ENCODE measurements at regions of chr9 and their contacts with region 1.

Region 1: GRCh38 chr9:4762108-4762885 is 21.3 kb upstream of the AK3 start:
- DNase-seq: peak; percentile 76
- H3K4me3 ChIP-seq: no peak overlapping the region
- H3K27ac ChIP-seq: no peak overlapping the region
- H3K4me1 ChIP-seq: no peaks in the 10 kb centered on the region
- H3K27me3 ChIP-seq: no peaks in the 10 kb centered on the region
- CTCF ChIP-seq: peak; percentile 54 to 88 (median 86)
- POLR2A ChIP-seq: no peak

Region 2: DNA sequence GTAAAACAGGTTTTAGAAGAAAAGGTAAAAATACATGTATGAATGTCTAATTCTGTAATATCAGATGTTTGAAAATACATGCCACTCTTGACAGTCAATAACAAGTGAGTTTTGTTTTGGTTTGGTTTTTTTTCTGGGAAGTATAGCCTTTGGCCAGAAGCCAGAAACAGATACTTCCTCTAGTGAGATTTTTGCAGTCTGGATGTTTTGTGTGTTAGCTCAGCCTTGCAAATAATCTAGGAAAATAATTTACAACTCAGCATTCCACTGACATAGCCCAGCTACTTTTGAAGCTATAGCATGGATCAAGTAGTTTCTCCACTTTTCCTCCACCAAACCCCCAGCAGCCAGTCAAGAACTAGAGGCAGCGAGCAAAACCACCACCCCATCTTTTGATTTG is 215.3 kb before region 1 on chr9:
- intact Hi-C with region 1: no loop called
- DNase-seq: no peak
- H3K4me3 ChIP-seq: no peak overlapping the region
- H3K27ac ChIP-seq: no peak overlapping the region
- H3K4me1 ChIP-seq: no peaks in the 10 kb centered on the region
- H3K27me3 ChIP-seq: no peaks in the 10 kb centered on the region
- CTCF ChIP-seq: no peak
- POLR2A ChIP-seq: no peak

Region 3: DNA sequence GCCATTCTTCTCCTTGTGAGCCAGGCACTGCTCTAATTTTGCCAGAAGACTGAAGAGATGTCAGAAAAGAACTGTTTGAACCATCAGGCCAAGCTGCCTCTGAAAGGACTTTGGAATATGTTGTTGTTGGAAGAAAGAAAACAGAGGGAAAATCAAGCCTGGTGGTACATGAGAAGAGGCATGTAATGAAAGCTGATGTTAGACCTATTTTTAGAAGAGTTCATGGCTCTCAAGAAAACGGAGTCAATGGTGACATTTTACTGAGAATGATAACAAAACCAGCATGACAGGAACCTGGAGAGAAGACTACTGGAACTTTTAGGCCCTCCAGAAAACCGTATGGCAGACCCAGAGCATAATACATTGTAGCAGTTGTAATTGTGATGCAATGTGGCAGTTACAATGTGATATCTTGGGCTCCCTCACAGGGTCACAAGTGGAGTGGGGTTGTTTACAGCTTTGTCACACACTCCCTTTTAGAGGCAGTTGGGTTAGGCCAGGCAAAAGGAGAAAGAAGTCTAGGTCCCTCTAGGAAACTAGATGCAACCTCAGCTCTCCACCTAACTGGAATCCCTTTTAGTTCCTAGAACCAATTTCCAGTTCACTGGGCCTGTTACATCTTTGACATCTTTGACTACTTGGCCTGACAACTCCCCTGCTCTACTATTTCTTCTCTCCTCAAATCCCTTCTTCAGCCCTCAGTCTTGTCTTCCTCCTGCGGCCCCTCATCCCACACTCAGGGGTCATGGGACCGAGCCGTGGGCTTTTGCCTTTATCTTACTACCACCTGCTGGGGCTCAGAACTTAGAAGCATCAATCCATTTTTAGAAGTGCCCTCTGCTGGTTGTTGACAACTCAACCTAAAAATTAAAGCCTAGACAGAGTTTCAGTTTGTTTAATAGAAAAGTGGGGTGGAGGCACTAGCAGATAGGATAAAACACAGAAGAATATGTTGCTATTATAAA is 161.6 kb after region 1 on chr9:
- intact Hi-C with region 1: loop called (anchors 10 kb)
- DNase-seq: no peak
- H3K4me3 ChIP-seq: no peak overlapping the region
- H3K27ac ChIP-seq: no peak overlapping the region
- H3K4me1 ChIP-seq: no peaks in the 10 kb centered on the region
- H3K27me3 ChIP-seq: no peaks in the 10 kb centered on the region
- CTCF ChIP-seq: peak in 2 of 4 experiments; percentile 28 to 33
- POLR2A ChIP-seq: no peak